ENCODE measurements at regions of chrX and their contacts with region 1.

Region 1: GRCh38 chrX:47144626-47145394 is at the starts of genes NDUFB11 and RBM10:
- DNase-seq: peak; percentile 95
- H3K4me3 Mint-ChIP-seq: peak within 1 kb of the TSS; percentile 99
- H3K27ac Mint-ChIP-seq: peak within 1 kb of the TSS; percentile 100
- H3K4me1 Mint-ChIP-seq: peaks cover 26% of the 10 kb centered on the region
- H3K27me3 Mint-ChIP-seq: no peaks in the 10 kb centered on the region
- total RNA-seq, gene NDUFB11: 86.4 to 89.1 TPM
- total RNA-seq, gene RBM10: 61.0 to 62.3 TPM

Region 2: DNA sequence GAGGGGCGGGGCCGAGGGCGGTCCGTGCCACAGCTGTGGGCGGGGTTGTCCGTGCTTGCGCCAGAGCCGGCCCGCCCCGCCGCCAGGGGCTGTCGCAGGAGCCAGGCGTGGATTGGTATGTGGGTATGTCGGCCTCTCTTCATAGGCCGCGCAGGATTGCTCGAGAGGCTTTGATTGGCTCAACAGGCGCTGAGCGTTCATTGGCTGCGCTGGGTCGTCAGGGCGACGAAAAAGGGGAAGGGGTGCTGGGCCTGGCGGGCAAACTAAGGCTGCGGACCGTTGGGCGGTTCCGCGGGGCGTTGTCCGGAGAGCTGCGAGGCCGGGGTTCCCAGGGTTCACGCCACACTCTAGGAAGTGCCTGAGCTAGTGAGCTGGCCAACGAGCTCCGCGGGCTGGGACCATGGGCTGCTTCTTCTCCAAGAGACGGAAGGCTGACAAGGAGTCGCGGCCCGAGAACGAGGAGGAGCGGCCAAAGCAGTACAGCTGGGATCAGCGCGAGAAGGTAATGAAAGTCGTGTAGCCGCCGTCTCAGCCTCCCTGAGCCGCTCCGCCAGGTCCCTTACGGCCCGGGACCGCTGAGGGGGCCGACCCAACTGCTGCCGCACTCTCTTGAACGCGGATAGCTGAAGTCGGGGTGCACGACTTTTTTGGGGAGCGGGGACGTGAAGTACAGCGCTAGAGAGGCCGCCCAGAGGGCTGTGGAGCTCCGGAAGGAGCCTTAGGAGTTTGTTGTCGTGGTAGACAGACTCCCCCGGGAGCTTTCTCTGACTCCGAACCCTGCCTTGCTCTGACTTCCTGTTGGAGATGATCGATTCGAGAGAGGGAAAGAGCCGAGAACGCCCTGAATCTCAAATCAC is 307.9 kb before region 1 on chrX and contains the start of gene RP2:
- CTCF ChIA-PET with region 1: no interaction called
- POLR2A ChIA-PET with region 1: no interaction called
- intact Hi-C with region 1: loop called (anchors 2 kb)
- DNase-seq: peak; percentile 90
- H3K4me3 Mint-ChIP-seq: peak within 1 kb of the TSS; percentile 97
- H3K27ac Mint-ChIP-seq: peak within 1 kb of the TSS; percentile 92
- H3K4me1 Mint-ChIP-seq: peaks cover 15% of the 10 kb centered on the region
- H3K27me3 Mint-ChIP-seq: no peaks in the 10 kb centered on the region
- total RNA-seq, gene RP2: 5.0 to 5.5 TPM

Region 3: DNA sequence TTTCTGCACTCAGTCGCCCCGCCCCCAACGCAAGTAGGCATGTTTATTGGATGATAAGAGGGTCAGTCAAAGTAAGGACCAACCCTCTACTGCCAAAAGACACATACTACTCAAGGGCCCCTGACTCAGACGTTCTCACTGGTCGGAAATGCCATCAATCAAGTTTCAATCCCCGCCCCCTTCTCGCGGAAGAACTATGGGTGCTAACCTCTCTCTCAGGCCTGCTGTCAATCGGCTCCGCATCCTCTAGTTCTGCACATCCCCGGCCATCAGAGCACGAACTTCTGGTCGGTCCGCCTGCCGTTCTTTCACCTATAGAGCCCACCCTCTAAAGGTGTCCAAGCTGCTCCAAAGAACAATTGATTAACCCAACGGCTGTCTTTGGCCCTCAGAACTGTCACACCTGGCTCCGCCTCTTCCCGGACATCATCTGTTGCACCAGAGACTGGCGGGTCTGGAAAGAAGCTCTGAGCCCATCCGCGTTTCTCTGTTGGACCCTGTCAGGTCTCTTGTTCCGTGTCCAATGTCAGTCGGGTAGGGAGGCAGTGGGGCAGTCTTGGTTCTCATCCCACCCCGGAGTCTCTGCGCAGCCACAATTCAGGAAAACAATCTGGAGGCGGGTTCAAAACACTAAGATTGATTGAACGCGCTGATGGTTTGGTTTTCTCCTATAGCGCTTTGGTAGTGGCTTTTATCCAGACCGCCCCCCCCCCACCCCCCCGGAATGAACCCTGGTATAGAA is 15.5 kb before region 1 on chrX:
- CTCF ChIA-PET with region 1: interaction called, 8 read pairs
- POLR2A ChIA-PET with region 1: interaction called, 14 read pairs
- intact Hi-C with region 1: loop called (anchors 1 kb)
- DNase-seq: peak; percentile 94
- H3K4me3 Mint-ChIP-seq: peak overlapping the region; percentile 96
- H3K27ac Mint-ChIP-seq: peak overlapping the region; percentile 95
- H3K4me1 Mint-ChIP-seq: peaks cover 4% of the 10 kb centered on the region
- H3K27me3 Mint-ChIP-seq: no peaks in the 10 kb centered on the region

Region 4: DNA sequence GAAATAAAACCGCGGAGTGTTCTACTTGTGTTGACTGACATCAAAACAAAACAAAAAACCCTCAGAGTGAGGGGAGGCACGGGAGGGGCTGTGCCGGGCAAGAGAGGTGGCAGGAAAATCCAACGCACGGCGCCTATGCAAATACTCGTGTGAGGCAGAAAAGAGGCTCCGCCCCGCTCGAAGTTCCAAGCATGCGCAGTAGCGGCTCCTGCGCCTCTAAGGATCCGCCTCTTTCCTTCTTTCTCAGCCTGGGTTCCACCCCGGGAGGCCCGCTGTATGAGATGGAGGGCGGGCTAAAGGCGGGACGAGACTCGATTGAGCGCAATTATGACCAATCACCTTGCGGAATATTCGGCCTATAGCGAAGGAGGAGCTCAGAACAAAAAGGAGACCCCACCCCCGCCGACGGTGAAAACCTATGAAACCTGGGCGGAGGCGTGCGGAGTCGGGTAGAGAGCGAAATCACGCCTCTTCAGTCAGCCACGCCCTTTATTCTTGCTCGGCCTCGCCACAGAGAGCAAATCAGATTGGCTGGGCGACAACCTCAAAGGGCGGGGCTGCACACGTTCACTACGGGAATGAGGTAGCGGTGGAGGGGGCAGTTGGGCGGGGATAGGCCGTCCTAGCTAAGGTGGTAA is 73.0 kb after region 1 on chrX:
- CTCF ChIA-PET with region 1: interaction called, 3 read pairs
- POLR2A ChIA-PET with region 1: interaction called, 7 read pairs
- intact Hi-C with region 1: loop called (anchors 1 kb)
- DNase-seq: peak; percentile 97
- H3K4me3 Mint-ChIP-seq: peak overlapping the region; percentile 87
- H3K27ac Mint-ChIP-seq: peak overlapping the region; percentile 97
- H3K4me1 Mint-ChIP-seq: peaks cover 32% of the 10 kb centered on the region
- H3K27me3 Mint-ChIP-seq: no peaks in the 10 kb centered on the region

Region 5: GRCh38 chrX:47233337-47234113 is 88.7 kb after region 1 on chrX:
- CTCF ChIA-PET with region 1: no interaction called
- POLR2A ChIA-PET with region 1: no interaction called
- intact Hi-C with region 1: loop called (anchors 1 kb)
- DNase-seq: peak; percentile 96
- H3K4me3 Mint-ChIP-seq: peak overlapping the region; percentile 83
- H3K27ac Mint-ChIP-seq: peak overlapping the region; percentile 87
- H3K4me1 Mint-ChIP-seq: peaks cover 25% of the 10 kb centered on the region
- H3K27me3 Mint-ChIP-seq: no peaks in the 10 kb centered on the region

Region 6: GRCh38 chrX:47482512-47483309 is 337.9 kb after region 1 on chrX and contains the start of gene ZNF41:
- CTCF ChIA-PET with region 1: no interaction called
- POLR2A ChIA-PET with region 1: no interaction called
- intact Hi-C with region 1: loop called (anchors 5 kb)
- DNase-seq: peak; percentile 80
- H3K4me3 Mint-ChIP-seq: peak within 1 kb of the TSS; percentile 86
- H3K27ac Mint-ChIP-seq: peak within 1 kb of the TSS; percentile 95
- H3K4me1 Mint-ChIP-seq: peaks cover 29% of the 10 kb centered on the region
- H3K27me3 Mint-ChIP-seq: no peaks in the 10 kb centered on the region
- total RNA-seq, gene ZNF41: 8.4 to 8.7 TPM

Region 7: DNA sequence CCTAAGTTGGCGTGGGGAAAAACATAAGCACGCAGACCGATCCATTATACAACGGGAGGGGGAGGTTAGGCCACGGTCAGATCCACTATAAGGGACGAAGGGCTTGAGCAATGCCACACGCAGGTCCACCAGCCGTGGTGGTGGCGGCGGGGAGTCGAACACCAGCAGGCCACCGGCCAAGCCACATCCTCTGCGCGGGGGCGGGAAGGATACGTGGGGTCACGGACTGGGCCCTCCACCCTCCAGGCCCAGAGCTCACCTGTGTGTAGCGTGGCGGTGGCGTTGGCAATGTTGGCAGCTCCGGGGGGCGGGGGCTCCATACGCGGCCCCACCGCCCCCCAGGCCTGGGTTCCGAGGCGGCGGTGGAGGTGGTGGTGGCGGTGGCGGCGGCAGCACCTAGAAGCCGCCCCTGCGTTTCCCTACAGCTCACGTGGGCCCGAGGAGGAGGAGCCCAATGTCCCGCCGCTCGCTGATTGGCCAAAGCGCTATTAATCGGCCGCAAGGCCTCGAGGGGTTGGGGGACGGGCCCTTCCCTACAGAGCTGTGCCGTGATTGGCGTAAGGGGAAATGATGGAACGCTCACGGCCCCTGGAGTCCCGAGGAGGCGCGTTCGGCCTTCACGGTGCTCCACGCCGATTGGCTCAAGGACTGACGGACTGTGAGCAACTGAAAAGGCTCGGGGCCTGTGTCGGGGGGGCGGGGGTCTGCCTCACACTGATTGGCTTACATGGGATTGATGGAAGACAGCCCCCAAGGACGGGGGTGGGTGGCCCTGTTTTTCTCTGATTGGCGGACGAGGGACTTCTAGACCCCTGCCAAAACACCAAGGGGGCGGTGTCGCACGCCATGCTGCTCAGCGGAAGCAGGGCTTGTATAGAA is 505.6 kb after region 1 on chrX and contains the start of gene ELK1:
- CTCF ChIA-PET with region 1: no interaction called
- POLR2A ChIA-PET with region 1: no interaction called
- intact Hi-C with region 1: loop called (anchors 10 kb)
- DNase-seq: peak; percentile 94
- H3K4me3 Mint-ChIP-seq: peak within 1 kb of the TSS; percentile 84
- H3K27ac Mint-ChIP-seq: peak within 1 kb of the TSS; percentile 93
- H3K4me1 Mint-ChIP-seq: peaks cover 41% of the 10 kb centered on the region
- H3K27me3 Mint-ChIP-seq: no peaks in the 10 kb centered on the region
- total RNA-seq, gene ELK1: 93.6 to 95.3 TPM

Measured in activated CD4-positive, alpha-beta memory T cell treated with anti-CD3 and anti-CD28 coated beads for 36 hours (primary cell).